CD8-positive, alpha-beta T cell (primary cell): ENCODE measurements at regions of chr14 and their contacts with region 1.

Region 1: DNA sequence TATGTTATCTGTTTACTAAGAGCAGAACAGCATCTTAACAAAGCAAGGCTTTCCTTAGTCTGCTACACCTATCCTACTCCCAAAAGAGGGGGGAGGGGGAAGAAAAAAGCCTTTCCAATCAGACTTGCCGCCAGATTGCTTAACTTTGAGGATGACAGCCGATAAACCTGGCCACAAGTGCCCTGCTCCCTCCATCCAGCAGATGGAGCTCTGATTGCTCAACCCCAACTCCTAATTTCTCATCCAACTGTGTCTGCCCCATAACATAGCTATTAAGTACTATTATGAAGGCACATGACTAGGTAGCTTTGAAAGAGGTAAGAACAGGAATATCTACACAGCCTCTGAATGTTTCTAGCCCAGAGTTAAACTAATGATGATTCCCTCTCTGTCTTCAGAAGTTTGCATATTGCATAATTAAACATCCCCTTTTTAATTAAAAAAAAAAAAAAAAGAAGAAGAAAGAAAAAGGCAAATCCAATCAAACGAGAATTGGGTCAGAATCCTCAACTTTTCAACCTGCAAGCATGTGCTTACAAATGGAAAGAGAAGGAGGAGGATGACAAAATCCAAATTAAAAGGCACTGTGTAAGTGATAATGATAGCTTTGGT is 247.4 kb downstream of the GALC start:
- DNase-seq: peak in 2 of 9 experiments; percentile 13 to 17
- ATAC-seq: no peak
- H3K4me3 ChIP-seq: no peak overlapping the region
- H3K4me3 Mint-ChIP-seq: no peak overlapping the region
- H3K27ac ChIP-seq: no peak overlapping the region
- H3K27ac Mint-ChIP-seq: no peak overlapping the region
- H3K4me1 ChIP-seq: no peaks in the 10 kb centered on the region
- H3K4me1 Mint-ChIP-seq: no peaks in the 10 kb centered on the region
- H3K27me3 ChIP-seq: peaks cover 0 to 4% of the 10 kb centered on the region in 2 experiments
- H3K27me3 Mint-ChIP-seq: peaks cover 4% of the 10 kb centered on the region
- CTCF ChIP-seq: peak; percentile 55

Region 2: DNA sequence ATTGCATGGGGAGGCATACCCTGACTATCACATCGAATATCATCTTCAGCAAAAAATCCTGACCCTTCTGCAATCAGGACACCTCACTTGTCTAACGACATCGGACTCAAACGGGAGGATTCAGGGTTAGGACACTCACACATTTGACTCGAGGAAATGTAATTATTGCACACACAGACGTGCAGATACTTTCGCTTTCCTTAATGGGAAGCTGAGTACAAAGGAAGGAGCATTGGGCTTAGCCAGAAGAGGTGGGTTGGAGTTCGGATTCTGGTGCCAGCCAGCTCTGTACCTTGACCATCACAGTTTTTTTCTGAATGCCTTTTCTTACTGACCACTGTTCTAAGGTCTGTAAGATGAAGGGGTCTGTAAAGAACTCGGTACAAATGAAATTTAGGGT is 13.1 kb before region 1 on chr14:
- CTCF ChIA-PET with region 1: interaction called, 14 read pairs
- POLR2A ChIA-PET with region 1: no interaction called
- intact Hi-C with region 1: no loop called
- DNase-seq: no peak
- ATAC-seq: no peak
- H3K4me3 ChIP-seq: no peak overlapping the region
- H3K4me3 Mint-ChIP-seq: no peak overlapping the region
- H3K27ac ChIP-seq: no peak overlapping the region
- H3K27ac Mint-ChIP-seq: no peak overlapping the region
- H3K4me1 ChIP-seq: no peaks in the 10 kb centered on the region
- H3K4me1 Mint-ChIP-seq: no peaks in the 10 kb centered on the region
- H3K27me3 ChIP-seq: no peaks in the 10 kb centered on the region
- H3K27me3 Mint-ChIP-seq: peaks cover 5% of the 10 kb centered on the region
- CTCF ChIP-seq: no peak

Region 3: GRCh38 chr14:87896393-87897380 is 151.1 kb after region 1 on chr14:
- CTCF ChIA-PET with region 1: interaction called, 5 read pairs
- POLR2A ChIA-PET with region 1: no interaction called
- intact Hi-C with region 1: loop called (anchors 1 to 5 kb)
- DNase-seq: peak in 2 of 9 experiments; percentile 35 to 47
- ATAC-seq: no peak
- H3K4me3 ChIP-seq: no peak overlapping the region
- H3K4me3 Mint-ChIP-seq: no peak overlapping the region
- H3K27ac ChIP-seq: no peak overlapping the region
- H3K27ac Mint-ChIP-seq: no peak overlapping the region
- H3K4me1 ChIP-seq: no peaks in the 10 kb centered on the region
- H3K4me1 Mint-ChIP-seq: no peaks in the 10 kb centered on the region
- H3K27me3 ChIP-seq: no peaks in the 10 kb centered on the region
- H3K27me3 Mint-ChIP-seq: peaks cover 18% of the 10 kb centered on the region
- CTCF ChIP-seq: peak; percentile 72